Mucosa of descending colon (tissue), 3 donors: ENCODE measurements at regions of chr1 and their contacts with region 1.

Region 1: GRCh38 chr1:157948312-157949073 is 45.0 kb upstream of the KIRREL1 start:
- DNase-seq: peak in 1 of 3 donors; percentile 63
- ATAC-seq: peak; percentile 72
- H3K4me3 ChIP-seq: no peak overlapping the region
- H3K4me1 ChIP-seq: no peaks in the 10 kb centered on the region
- CTCF ChIP-seq: peak; percentile 27

Region 2: DNA sequence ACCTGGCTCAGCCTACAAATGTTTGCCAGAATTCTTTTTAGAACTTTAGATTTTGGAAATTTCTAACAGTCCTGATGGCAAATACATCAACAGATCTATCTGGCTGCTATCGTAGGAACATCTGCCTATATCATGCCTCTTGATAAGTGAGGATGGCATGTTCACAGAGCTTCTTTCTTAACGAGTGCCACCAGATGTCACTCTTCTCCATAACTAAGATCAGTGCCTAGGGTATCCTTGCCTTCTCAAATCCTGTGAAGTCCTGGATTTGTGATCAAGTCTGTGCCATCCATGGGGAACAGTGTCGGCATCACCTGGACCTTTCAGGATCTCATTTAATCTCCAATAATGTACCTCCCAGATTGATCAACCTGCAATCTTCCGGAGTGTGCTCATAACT is 70.4 kb before region 1 on chr1:
- intact Hi-C with region 1: loop called in 1 of 2 experiments (anchors 2 kb)
- DNase-seq: peak in 1 of 3 donors; percentile 32
- ATAC-seq: peak; percentile 45
- H3K4me3 ChIP-seq: no peak overlapping the region
- H3K4me1 ChIP-seq: no peaks in the 10 kb centered on the region
- CTCF ChIP-seq: no peak